Vagina (tissue), 2 donors: ENCODE measurements at regions of chr4 and their contacts with region 1.

Region 1: DNA sequence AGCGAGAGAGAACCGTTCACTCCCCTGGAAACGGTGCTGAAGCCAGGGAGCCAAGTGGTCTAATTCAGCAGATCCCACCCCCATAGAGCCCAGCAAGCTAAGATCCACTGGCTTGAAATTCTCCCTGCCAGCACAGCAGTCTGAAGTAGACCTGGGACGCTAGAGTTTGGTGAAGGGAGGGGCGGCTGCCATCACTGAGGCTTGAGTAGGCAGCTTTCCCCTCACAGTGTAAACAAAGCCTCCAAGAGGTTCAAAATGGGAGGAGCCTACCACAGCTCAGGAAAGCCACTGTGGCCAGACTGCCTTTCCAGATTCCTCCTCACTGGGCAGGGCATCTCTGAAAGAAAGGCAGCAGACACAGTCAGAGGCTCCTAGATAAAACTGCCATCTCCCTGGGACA is 37.8 kb upstream of the CDS1 start:
- DNase-seq: no peak
- H3K4me3 ChIP-seq: no peak overlapping the region
- H3K27ac ChIP-seq: no peak overlapping the region
- H3K4me1 ChIP-seq: no peaks in the 10 kb centered on the region
- H3K27me3 ChIP-seq: no peaks in the 10 kb centered on the region
- CTCF ChIP-seq: no peak
- POLR2A ChIP-seq: no peak

Region 2: DNA sequence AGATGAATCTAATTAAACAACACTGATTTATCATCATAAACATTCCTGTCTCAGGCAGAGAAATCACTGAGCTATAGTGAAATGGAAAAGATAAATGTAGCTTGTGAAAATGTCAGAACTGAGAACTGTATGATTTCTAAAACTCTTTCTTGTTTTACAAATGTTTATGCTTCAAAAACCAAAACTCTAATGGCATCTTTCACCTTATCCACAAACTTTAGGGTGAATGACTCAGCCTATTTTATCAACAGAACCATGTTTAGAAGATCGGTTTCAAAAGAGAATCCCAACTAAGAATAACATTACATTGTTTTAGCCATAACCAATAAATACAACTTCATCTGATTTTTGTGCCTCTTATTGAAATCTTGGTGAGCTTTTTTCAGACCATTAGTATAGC is 67.4 kb before region 1 on chr4:
- intact Hi-C with region 1: loop called (anchors 2 kb)
- DNase-seq: no peak
- H3K4me3 ChIP-seq: no peak overlapping the region
- H3K27ac ChIP-seq: no peak overlapping the region
- H3K4me1 ChIP-seq: peaks cover 16% of the 10 kb centered on the region
- H3K27me3 ChIP-seq: peaks cover 14% of the 10 kb centered on the region
- CTCF ChIP-seq: no peak
- POLR2A ChIP-seq: no peak

Region 3: DNA sequence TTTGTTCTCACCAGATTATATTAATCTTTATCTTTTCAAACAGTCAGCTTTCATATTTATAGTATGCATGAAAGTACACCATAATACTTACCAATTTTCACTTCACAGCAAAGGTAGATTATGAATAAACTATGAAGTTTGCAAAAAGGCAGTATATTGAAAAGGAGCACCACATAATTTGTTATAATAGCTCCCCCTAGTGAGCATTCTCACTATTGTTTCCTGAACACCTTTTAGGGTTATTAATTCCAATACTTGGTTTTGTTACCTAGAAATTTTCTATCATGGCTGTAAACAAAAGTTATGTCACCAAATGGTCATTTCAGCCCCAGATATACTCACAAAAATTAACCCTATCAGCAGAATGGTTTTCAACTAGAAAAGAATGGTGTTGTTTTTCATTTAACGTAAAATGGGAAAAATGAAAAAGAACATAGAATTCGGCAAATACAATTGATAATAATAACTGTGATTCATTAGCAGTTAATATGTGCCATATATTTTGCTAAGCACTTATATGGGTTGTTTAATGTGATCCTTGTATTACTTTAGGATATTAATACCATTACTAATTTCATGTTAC is 15.8 kb before region 1 on chr4:
- intact Hi-C with region 1: no loop called
- DNase-seq: no peak
- H3K4me3 ChIP-seq: no peak overlapping the region
- H3K27ac ChIP-seq: no peak overlapping the region
- H3K4me1 ChIP-seq: no peaks in the 10 kb centered on the region
- H3K27me3 ChIP-seq: no peaks in the 10 kb centered on the region
- CTCF ChIP-seq: peak in 1 of 3 experiments; percentile 21
- POLR2A ChIP-seq: no peak

Region 4: DNA sequence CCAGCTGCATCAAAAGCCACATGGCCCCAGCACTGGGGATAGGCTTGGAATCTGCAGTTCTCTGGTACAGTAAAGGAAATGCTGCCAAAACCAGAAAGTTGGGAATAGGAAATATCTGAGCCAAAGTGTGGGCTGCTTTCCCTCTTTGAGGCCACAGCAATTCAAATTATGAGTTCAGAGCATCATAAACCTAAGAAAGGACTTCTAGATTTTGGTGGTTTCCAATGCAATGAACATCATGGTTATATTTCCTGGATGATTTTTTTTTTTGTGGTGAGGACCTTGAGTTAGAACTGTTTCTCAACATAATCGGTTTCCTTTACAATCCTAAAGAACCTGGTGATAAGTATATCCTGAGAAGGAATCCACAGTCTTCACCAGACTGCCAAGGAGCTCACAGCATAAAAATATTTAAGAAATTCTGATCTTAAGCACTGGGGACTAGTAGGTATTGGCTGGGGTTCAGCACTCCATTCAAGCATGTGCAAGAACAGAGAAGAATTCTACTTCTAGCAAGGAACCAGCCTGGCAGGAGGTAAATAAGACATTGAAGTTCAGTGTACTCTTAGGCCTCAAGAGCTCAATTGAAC is 900.1 kb after region 1 on chr4:
- intact Hi-C with region 1: no loop called
- DNase-seq: no peak
- H3K4me3 ChIP-seq: no peak overlapping the region
- H3K27ac ChIP-seq: no peak overlapping the region
- H3K4me1 ChIP-seq: peaks cover 10% of the 10 kb centered on the region
- H3K27me3 ChIP-seq: no peaks in the 10 kb centered on the region
- CTCF ChIP-seq: no peak
- POLR2A ChIP-seq: no peak